ENCODE measurements at regions of chr14 and their contacts with region 1.

Region 1: GRCh38 chr14:56760164-56760914 is 49.9 kb downstream of the OTX2 start:
- DNase-seq: no peak
- H3K4me3 ChIP-seq: no peak overlapping the region
- H3K27ac ChIP-seq: no peak overlapping the region
- H3K4me1 ChIP-seq: no peaks in the 10 kb centered on the region
- H3K27me3 ChIP-seq: no peaks in the 10 kb centered on the region
- CTCF ChIP-seq: no peak
- EP300 ChIP-seq: no peak
- POLR2A ChIP-seq: no peak

Region 2: DNA sequence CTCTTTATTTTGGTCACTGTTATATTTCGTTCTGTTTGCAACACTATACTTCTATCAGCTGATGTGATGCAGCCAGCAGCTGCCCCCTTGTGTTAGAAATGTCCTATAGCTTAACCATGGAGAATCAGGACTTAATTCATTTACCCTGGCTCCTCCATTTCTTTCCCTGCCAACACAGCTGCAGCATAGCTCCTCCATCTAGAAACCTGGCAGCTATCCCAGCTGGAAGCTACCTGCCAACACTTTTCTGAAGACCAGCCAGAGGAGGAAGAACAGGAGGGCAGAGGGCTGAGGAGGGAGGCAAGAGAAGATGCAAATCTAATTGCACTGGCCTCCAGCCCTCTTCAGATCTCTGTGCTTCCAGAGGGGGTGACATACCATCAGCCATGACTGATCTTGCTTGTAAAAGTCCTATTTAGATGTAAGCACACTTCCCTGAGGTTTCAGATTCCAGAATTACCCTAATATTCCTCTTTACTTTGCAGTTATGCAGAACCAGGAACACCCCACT is 337.6 kb before region 1 on chr14:
- in situ Hi-C with region 1: no loop called
- intact Hi-C with region 1: no loop called
- DNase-seq: peak; percentile 31
- H3K4me3 ChIP-seq: no peak overlapping the region
- H3K27ac ChIP-seq: no peak overlapping the region
- H3K4me1 ChIP-seq: peaks cover 0 to 6% (median 2%) of the 10 kb centered on the region in 4 donors
- H3K27me3 ChIP-seq: no peaks in the 10 kb centered on the region
- CTCF ChIP-seq: peak; percentile 58 to 65 (median 59)
- EP300 ChIP-seq: no peak
- POLR2A ChIP-seq: no peak

Region 3: DNA sequence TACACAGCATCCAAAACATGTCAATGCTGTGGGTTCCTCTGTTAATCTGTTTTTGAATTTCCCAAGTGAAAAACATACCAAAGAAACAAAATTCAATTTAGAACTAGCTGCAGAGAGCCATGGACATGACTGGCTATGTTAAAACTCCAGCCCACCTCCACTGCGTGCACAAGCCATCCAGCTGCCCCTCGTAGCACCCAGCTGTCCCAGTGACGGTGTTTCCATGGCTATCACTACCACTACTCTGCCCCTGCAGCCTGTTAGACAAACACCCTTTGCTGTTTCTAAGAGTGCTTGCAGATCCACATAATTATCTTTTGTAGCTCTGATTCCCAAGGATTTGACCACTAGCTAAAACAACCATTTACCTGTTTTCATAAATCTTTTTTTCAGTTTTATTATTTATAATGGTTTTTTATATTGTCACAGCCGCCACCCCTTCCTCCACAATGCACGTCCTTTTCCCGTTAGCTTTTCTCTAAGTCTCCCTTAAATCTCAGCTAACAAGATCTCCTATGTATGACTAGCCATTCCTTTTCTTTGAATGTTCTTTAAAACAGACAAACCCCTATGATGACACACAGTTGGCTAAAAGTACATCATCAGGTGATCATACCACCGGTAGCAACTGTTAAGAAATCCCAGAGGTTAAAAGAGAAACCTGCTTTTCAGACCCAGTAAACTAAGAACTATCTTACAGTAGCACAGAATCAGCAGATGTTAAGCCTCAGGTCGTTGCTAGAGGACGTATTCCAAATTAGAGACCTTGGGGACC is 592.2 kb after region 1 on chr14:
- in situ Hi-C with region 1: no loop called
- intact Hi-C with region 1: loop called (anchors 5 kb)
- DNase-seq: no peak
- H3K4me3 ChIP-seq: no peak overlapping the region
- H3K27ac ChIP-seq: no peak overlapping the region
- H3K4me1 ChIP-seq: no peaks in the 10 kb centered on the region
- H3K27me3 ChIP-seq: no peaks in the 10 kb centered on the region
- CTCF ChIP-seq: no peak
- EP300 ChIP-seq: no peak
- POLR2A ChIP-seq: no peak

Measured in transverse colon (tissue), 4 donors.